BJ (cell line): ENCODE measurements at regions of chr7 and their contacts with region 1.

Region 1: DNA sequence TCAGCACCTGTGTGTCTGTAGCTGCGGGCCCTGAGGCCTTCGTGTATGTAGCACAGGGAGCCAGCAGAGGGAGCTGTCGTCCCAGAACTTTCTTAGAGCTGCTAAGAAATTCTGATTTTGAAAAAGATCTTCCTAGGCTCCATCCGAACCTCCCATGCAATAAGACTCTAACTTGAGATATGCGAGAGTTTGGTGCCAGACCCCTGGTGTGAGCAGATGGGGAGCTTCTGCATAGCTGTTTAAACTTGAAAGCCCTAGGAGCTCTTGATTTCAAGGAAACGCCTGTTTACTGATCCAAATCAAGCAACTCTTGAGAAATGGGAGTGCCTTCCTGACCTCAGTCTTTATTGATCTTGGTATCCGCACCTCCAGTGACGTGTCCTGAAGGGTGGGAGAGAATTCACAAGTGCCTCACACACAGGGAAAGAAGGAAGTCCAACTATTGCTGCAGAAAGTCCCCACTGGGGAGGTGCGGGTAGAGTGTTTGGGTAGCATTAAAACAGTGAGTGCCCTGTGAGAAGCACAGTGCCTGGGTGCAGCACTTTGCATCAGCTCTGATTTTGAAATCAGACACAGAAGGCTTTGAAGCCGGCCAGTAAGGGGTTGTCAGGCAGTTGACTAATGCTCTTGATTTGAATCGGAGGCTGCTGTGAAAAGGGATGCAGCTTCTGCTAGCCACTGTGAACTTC is 66.4 kb upstream of the STRIP2 start:
- DNase-seq: no peak
- H3K4me3 ChIP-seq: no peak overlapping the region
- H3K27me3 ChIP-seq: no peaks in the 10 kb centered on the region
- CTCF ChIP-seq: peak; percentile 92

Region 2: GRCh38 chr7:128904381-128905197 is 463.3 kb before region 1 on chr7:
- CTCF ChIA-PET with region 1: no interaction called
- POLR2A ChIA-PET with region 1: no interaction called
- DNase-seq: no peak
- H3K4me3 ChIP-seq: no peak overlapping the region
- H3K27me3 ChIP-seq: peaks cover 7% of the 10 kb centered on the region
- CTCF ChIP-seq: peak; percentile 63

Region 3: GRCh38 chr7:129041142-129042085 is 326.4 kb before region 1 on chr7:
- CTCF ChIA-PET with region 1: no interaction called
- POLR2A ChIA-PET with region 1: no interaction called
- DNase-seq: no peak
- H3K4me3 ChIP-seq: no peak overlapping the region
- H3K27me3 ChIP-seq: no peaks in the 10 kb centered on the region
- CTCF ChIP-seq: no peak

Region 4: GRCh38 chr7:129285111-129285510 is 82.7 kb before region 1 on chr7:
- CTCF ChIA-PET with region 1: no interaction called
- POLR2A ChIA-PET with region 1: no interaction called
- DNase-seq: no peak
- H3K4me3 ChIP-seq: no peak overlapping the region
- H3K27me3 ChIP-seq: no peaks in the 10 kb centered on the region
- CTCF ChIP-seq: no peak

Region 5: GRCh38 chr7:129343099-129343700 is 24.6 kb before region 1 on chr7:
- CTCF ChIA-PET with region 1: interaction called, 11 read pairs
- POLR2A ChIA-PET with region 1: no interaction called
- DNase-seq: no peak
- H3K4me3 ChIP-seq: no peak overlapping the region
- H3K27me3 ChIP-seq: no peaks in the 10 kb centered on the region
- CTCF ChIP-seq: peak; percentile 71

Region 6: GRCh38 chr7:129381710-129382484 is 14.1 kb after region 1 on chr7:
- CTCF ChIA-PET with region 1: interaction called, 40 read pairs
- POLR2A ChIA-PET with region 1: no interaction called
- DNase-seq: no peak
- H3K4me3 ChIP-seq: no peak overlapping the region
- H3K27me3 ChIP-seq: no peaks in the 10 kb centered on the region
- CTCF ChIP-seq: no peak

Region 7: GRCh38 chr7:129433847-129434674 is 66.2 kb after region 1 on chr7 and contains the start of gene STRIP2:
- CTCF ChIA-PET with region 1: interaction called, 12 read pairs
- POLR2A ChIA-PET with region 1: no interaction called
- DNase-seq: peak; percentile 19
- H3K4me3 ChIP-seq: peak within 1 kb of the TSS; percentile 75
- H3K27me3 ChIP-seq: 0 out of 2 replicates have a peak, but pooled peaks cover 1% of the 10 kb centered on the region
- CTCF ChIP-seq: peak; percentile 34
- polyA plus RNA-seq, gene STRIP2: 1.5 and 2.0 TPM in 2 replicates

Region 8: GRCh38 chr7:129479831-129480230 is 112.0 kb after region 1 on chr7:
- CTCF ChIA-PET with region 1: interaction called, 154 read pairs
- POLR2A ChIA-PET with region 1: no interaction called
- DNase-seq: no peak
- H3K4me3 ChIP-seq: no peak overlapping the region
- H3K27me3 ChIP-seq: no peaks in the 10 kb centered on the region
- CTCF ChIP-seq: no peak

Region 9: GRCh38 chr7:129644634-129645230 is 276.9 kb after region 1 on chr7:
- CTCF ChIA-PET with region 1: interaction called, 76 read pairs
- POLR2A ChIA-PET with region 1: no interaction called
- DNase-seq: no peak
- H3K4me3 ChIP-seq: no peak overlapping the region
- H3K27me3 ChIP-seq: no peaks in the 10 kb centered on the region
- CTCF ChIP-seq: peak; percentile 57

Region 10: DNA sequence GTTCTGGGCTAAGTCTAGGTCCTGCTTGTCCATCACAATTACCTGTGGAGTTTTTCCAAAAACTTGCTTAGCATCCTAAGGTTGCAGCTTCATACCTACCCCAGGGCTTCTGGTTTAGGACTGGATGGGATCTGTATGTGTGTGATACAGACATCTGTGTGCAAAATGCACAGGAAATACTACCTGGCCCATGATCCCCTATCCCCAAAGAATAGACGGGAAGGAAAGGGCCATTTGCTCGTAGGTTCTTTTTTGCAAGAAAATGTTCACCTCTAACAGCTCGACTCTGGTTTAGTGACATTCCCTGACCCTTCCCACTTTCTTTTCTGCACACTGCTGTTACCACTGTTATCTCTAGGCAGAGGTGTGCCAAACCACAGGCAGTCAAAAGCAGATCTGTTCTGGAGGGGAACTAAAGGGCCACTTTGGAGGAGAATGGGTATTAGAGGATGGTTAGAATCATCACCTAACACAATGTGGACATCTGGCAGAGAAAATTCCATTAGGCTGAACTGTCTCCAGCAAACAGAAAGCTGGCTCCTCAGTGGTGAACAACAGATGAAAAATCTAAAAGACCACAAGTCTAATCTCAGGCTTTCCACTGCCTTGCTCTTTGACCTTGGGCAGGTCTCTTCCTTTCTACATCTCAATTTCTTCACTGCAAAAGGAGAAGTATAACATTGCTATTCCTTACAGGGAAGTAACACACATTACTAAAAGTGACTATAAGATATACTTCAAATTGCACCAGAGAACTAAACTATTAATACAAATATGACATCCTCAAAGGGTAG is 477.5 kb after region 1 on chr7:
- CTCF ChIA-PET with region 1: no interaction called
- POLR2A ChIA-PET with region 1: no interaction called
- DNase-seq: no peak
- H3K4me3 ChIP-seq: no peak overlapping the region
- H3K27me3 ChIP-seq: no peaks in the 10 kb centered on the region
- CTCF ChIP-seq: no peak